ENCODE measurements at regions of chr1 and their contacts with region 1.

Region 1: GRCh38 chr1:59678493-59679228 is 136.1 kb upstream of the HOOK1 start:
- DNase-seq: no peak
- ATAC-seq: no peak
- H3K4me3 ChIP-seq: no peak overlapping the region
- H3K27ac ChIP-seq: peak overlapping the region; percentile 32
- H3K4me1 ChIP-seq: peaks cover 64% of the 10 kb centered on the region
- H3K27me3 ChIP-seq: no peaks in the 10 kb centered on the region
- CTCF ChIP-seq: no peak

Region 2: GRCh38 chr1:59520827-59521418 is 157.7 kb before region 1 on chr1:
- intact Hi-C with region 1: loop called in 1 of 2 experiments (anchors 10 kb)
- DNase-seq: no peak
- ATAC-seq: peak; percentile 48 to 62 (median 56)
- H3K4me3 ChIP-seq: no peak overlapping the region
- H3K27ac ChIP-seq: peak overlapping the region; percentile 86
- H3K4me1 ChIP-seq: peaks cover 34% of the 10 kb centered on the region
- H3K27me3 ChIP-seq: no peaks in the 10 kb centered on the region
- CTCF ChIP-seq: no peak

Region 3: DNA sequence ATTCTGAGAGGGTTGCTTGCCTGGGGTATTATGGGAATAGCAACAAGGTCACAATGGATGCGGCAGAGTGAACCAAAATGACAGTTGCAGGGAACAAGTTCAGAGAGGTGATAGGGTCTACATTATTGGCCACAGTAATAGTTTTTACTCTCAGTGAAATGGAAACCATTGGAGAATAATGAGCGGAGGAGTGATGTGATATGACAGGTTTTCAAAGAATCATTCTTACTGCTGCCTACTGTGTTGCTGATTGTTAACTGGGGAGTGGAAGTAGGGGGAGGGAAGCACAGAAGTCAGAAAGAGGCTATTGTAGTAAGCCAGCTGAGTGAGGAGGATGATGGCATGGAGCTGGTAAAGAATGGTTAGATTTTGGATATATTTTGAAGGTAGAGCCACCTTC is 59.1 kb before region 1 on chr1:
- intact Hi-C with region 1: loop called in 1 of 2 experiments (anchors 5 kb)
- DNase-seq: no peak
- ATAC-seq: no peak
- H3K4me3 ChIP-seq: no peak overlapping the region
- H3K27ac ChIP-seq: no peak overlapping the region
- H3K4me1 ChIP-seq: no peaks in the 10 kb centered on the region
- H3K27me3 ChIP-seq: no peaks in the 10 kb centered on the region
- CTCF ChIP-seq: no peak